ENCODE measurements at regions of chr16 and their contacts with region 1.

Region 1: GRCh38 chr16:56866943-56867830 is 2.2 kb downstream of the SLC12A3 start:
- DNase-seq: peak in 10 of 14 experiments; percentile 7 to 76 (median 29)
- ATAC-seq: peak; percentile 56
- H3K4me3 ChIP-seq: no peak overlapping the region
- H3K4me3 Mint-ChIP-seq: no peak overlapping the region
- H3K27ac ChIP-seq: no peak overlapping the region
- H3K27ac Mint-ChIP-seq: no peak overlapping the region
- H3K4me1 ChIP-seq: peaks cover 33% of the 10 kb centered on the region
- H3K4me1 Mint-ChIP-seq: peaks cover 13% of the 10 kb centered on the region
- H3K27me3 ChIP-seq: no peaks in the 10 kb centered on the region
- H3K27me3 Mint-ChIP-seq: no peaks in the 10 kb centered on the region
- CTCF ChIP-seq: peak; percentile 84

Region 2: GRCh38 chr16:56807011-56807675 is 60.0 kb before region 1 on chr16:
- CTCF ChIA-PET with region 1: no interaction called
- POLR2A ChIA-PET with region 1: no interaction called
- intact Hi-C with region 1: no loop called
- DNase-seq: no peak
- ATAC-seq: no peak
- H3K4me3 ChIP-seq: no peak overlapping the region
- H3K4me3 Mint-ChIP-seq: no peak overlapping the region
- H3K27ac ChIP-seq: no peak overlapping the region
- H3K27ac Mint-ChIP-seq: no peak overlapping the region
- H3K4me1 ChIP-seq: no peaks in the 10 kb centered on the region
- H3K4me1 Mint-ChIP-seq: no peaks in the 10 kb centered on the region
- H3K27me3 ChIP-seq: no peaks in the 10 kb centered on the region
- H3K27me3 Mint-ChIP-seq: no peaks in the 10 kb centered on the region
- CTCF ChIP-seq: no peak

Region 3: GRCh38 chr16:56877486-56878182 is 10.4 kb after region 1 on chr16:
- CTCF ChIA-PET with region 1: no interaction called
- POLR2A ChIA-PET with region 1: no interaction called
- intact Hi-C with region 1: no loop called
- DNase-seq: no peak
- ATAC-seq: no peak
- H3K4me3 ChIP-seq: no peak overlapping the region
- H3K4me3 Mint-ChIP-seq: no peak overlapping the region
- H3K27ac ChIP-seq: no peak overlapping the region
- H3K27ac Mint-ChIP-seq: no peak overlapping the region
- H3K4me1 ChIP-seq: no peaks in the 10 kb centered on the region
- H3K4me1 Mint-ChIP-seq: no peaks in the 10 kb centered on the region
- H3K27me3 ChIP-seq: no peaks in the 10 kb centered on the region
- H3K27me3 Mint-ChIP-seq: no peaks in the 10 kb centered on the region
- CTCF ChIP-seq: no peak

Region 4: DNA sequence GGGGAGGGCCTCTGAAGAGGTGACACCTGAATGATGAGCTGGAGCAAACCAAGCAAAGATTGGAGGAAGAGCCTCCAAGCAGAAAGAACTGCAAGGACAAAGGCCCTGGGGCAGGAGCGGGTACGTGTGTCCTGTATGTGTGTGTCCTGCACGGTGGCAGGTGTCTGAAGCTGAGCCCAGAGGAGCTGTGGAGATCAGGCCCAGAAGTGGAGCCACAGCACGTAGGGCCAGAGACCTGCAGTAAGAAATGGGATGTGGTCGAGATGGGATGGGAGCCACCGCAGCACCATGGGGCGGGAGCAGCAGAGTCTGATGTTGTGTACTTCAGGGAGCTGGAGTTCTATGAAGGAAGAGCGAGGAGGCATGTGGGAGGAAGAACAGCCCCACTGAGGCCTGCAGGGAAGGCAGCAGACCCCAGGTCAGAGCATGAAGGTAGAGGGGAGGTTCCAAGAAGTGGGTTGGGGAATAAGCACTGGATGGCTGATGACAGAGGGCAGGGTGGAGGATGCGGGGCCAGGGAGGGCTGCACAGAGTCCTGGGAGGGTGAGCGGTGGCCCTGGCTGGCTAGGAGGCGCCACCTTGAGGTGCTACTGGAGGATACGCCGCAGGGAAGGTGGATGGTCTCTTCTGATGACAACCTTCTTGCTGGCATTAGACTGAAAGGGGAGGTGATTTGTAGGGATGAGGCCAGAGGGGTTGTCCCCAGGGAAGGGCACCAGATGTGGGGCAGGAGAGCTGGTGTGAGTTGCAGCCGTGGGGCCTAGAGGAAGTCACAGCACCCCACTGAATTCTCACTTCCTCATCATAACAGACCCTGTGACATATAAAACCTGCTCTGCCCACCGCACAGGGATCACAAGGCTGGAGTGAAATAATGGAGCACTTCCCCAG is 83.9 kb after region 1 on chr16:
- CTCF ChIA-PET with region 1: no interaction called
- POLR2A ChIA-PET with region 1: no interaction called
- intact Hi-C with region 1: loop called (anchors 1 kb)
- DNase-seq: peak in 13 of 14 experiments; percentile 18 to 71 (median 42)
- ATAC-seq: peak; percentile 85
- H3K4me3 ChIP-seq: no peak overlapping the region
- H3K4me3 Mint-ChIP-seq: no peak overlapping the region
- H3K27ac ChIP-seq: no peak overlapping the region
- H3K27ac Mint-ChIP-seq: no peak overlapping the region
- H3K4me1 ChIP-seq: peaks cover 5% of the 10 kb centered on the region
- H3K4me1 Mint-ChIP-seq: no peaks in the 10 kb centered on the region
- H3K27me3 ChIP-seq: no peaks in the 10 kb centered on the region
- H3K27me3 Mint-ChIP-seq: no peaks in the 10 kb centered on the region
- CTCF ChIP-seq: peak; percentile 52

Region 5: DNA sequence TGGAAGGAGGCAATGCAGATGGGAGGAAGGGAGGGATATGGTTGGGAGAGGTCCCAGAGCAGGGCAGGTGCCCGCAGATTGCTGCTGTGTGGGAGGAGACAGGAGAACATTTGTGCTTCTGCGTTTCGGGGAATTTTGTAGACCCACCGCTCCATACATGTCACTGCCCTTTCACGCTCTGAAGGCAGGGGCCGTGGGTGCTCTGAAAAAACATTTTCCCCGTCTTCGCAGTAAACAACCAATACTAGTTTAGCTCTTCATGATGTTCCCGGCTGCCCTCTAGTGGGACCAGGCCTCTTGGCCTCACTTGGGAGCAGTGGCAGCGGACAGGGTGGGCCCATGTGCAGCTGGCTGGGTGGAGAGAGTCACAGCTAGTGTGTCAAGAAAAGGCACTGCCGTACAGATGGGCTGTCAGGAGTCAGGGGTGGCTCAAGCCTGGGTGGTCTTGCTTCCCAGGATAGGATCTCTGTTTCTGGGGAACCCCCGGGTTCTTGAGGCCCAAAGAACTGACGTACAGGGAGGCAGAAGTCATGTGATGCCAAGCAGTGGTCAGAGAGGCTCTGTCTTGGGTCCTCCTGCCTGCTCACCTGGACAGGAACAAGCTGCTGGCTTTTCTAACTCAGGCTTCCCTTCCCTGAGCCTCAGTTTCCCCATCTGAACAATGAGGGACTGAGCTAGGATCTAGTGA is 178.7 kb after region 1 on chr16:
- CTCF ChIA-PET with region 1: no interaction called
- POLR2A ChIA-PET with region 1: no interaction called
- intact Hi-C with region 1: loop called in 1 of 2 experiments (anchors 10 kb)
- DNase-seq: peak in 10 of 14 experiments; percentile 22 to 60 (median 38)
- ATAC-seq: no peak
- H3K4me3 ChIP-seq: no peak overlapping the region
- H3K4me3 Mint-ChIP-seq: no peak overlapping the region
- H3K27ac ChIP-seq: peak overlapping the region; percentile 32 to 44
- H3K27ac Mint-ChIP-seq: peak overlapping the region; percentile 85
- H3K4me1 ChIP-seq: peaks cover 60% of the 10 kb centered on the region
- H3K4me1 Mint-ChIP-seq: peaks cover 50% of the 10 kb centered on the region
- H3K27me3 ChIP-seq: no peaks in the 10 kb centered on the region
- H3K27me3 Mint-ChIP-seq: no peaks in the 10 kb centered on the region
- CTCF ChIP-seq: peak; percentile 42

Region 6: DNA sequence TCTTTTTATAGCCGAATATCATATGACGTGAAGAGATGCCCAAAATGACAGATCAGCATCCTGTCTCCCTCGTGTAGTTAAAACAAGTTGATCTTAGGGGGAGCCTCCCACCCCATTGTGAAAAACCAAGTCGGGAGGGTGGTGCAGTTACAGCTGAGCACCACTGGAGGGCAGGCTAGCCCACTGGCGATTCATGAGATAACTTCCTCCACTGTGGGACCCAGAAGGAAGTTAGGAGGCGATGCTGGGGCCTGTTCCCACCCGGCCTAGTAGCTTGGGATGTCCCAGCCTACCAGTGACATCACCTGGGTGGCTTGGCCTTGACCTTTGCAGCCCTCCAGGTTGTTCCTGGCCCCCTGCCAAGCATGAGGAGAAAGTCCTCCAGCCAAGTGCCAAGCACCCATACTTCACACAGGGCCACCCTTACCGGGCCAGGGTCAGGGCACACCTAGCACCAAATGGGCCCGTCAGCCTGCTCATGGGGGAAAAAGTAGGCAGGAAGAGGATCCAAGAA is 217.1 kb after region 1 on chr16:
- CTCF ChIA-PET with region 1: no interaction called
- POLR2A ChIA-PET with region 1: no interaction called
- intact Hi-C with region 1: loop called in 1 of 2 experiments (anchors 10 kb)
- DNase-seq: peak; percentile 56 to 90 (median 70)
- ATAC-seq: peak; percentile 96
- H3K4me3 ChIP-seq: no peak overlapping the region
- H3K4me3 Mint-ChIP-seq: no peak overlapping the region
- H3K27ac ChIP-seq: peak overlapping the region; percentile 43 to 57
- H3K27ac Mint-ChIP-seq: peak overlapping the region; percentile 84
- H3K4me1 ChIP-seq: peaks cover 11% of the 10 kb centered on the region
- H3K4me1 Mint-ChIP-seq: peaks cover 12% of the 10 kb centered on the region
- H3K27me3 ChIP-seq: no peaks in the 10 kb centered on the region
- H3K27me3 Mint-ChIP-seq: no peaks in the 10 kb centered on the region
- CTCF ChIP-seq: peak; percentile 92

Region 7: GRCh38 chr16:57167953-57168352 is 300.8 kb after region 1 on chr16:
- CTCF ChIA-PET with region 1: no interaction called
- POLR2A ChIA-PET with region 1: no interaction called
- intact Hi-C with region 1: loop called in 1 of 2 experiments (anchors 5 kb)
- DNase-seq: peak in 4 of 14 experiments; percentile 24 to 84 (median 80)
- ATAC-seq: peak; percentile 98
- H3K4me3 ChIP-seq: no peak overlapping the region
- H3K4me3 Mint-ChIP-seq: no peak overlapping the region
- H3K27ac ChIP-seq: no peak overlapping the region
- H3K27ac Mint-ChIP-seq: no peak overlapping the region
- H3K4me1 ChIP-seq: peaks cover 5% of the 10 kb centered on the region
- H3K4me1 Mint-ChIP-seq: peaks cover 27% of the 10 kb centered on the region
- H3K27me3 ChIP-seq: no peaks in the 10 kb centered on the region
- H3K27me3 Mint-ChIP-seq: no peaks in the 10 kb centered on the region
- CTCF ChIP-seq: peak; percentile 75

Region 8: GRCh38 chr16:57422026-57422944 is 555.1 kb after region 1 on chr16:
- CTCF ChIA-PET with region 1: no interaction called
- POLR2A ChIA-PET with region 1: no interaction called
- intact Hi-C with region 1: no loop called
- DNase-seq: no peak
- ATAC-seq: no peak
- H3K4me3 ChIP-seq: no peak overlapping the region
- H3K4me3 Mint-ChIP-seq: no peak overlapping the region
- H3K27ac ChIP-seq: no peak overlapping the region
- H3K27ac Mint-ChIP-seq: no peak overlapping the region
- H3K4me1 ChIP-seq: peaks cover 16% of the 10 kb centered on the region
- H3K4me1 Mint-ChIP-seq: peaks cover 14% of the 10 kb centered on the region
- H3K27me3 ChIP-seq: no peaks in the 10 kb centered on the region
- H3K27me3 Mint-ChIP-seq: no peaks in the 10 kb centered on the region
- CTCF ChIP-seq: no peak